Dendritic cell treated with granulocyte-macrophage colony-stimulating factor and Interleukin-4, amounts not matched to agents 40 ng/mL and 50 ng/mL, for 4 days (primary cell): ENCODE measurements at regions of chr12 and their contacts with region 1.

Region 1: GRCh38 chr12:3885277-3886094 is 12.3 kb upstream of the PARP11 start:
- H3K4me3 Mint-ChIP-seq: no peak overlapping the region
- H3K27ac Mint-ChIP-seq: no peak overlapping the region
- H3K4me1 Mint-ChIP-seq: no peaks in the 10 kb centered on the region
- H3K27me3 Mint-ChIP-seq: peaks cover 13% of the 10 kb centered on the region

Region 2: GRCh38 chr12:3901116-3901515 is 15.6 kb after region 1 on chr12:
- intact Hi-C with region 1: no loop called
- H3K4me3 Mint-ChIP-seq: no peak overlapping the region
- H3K27ac Mint-ChIP-seq: no peak overlapping the region
- H3K4me1 Mint-ChIP-seq: peaks cover 11% of the 10 kb centered on the region
- H3K27me3 Mint-ChIP-seq: no peaks in the 10 kb centered on the region

Region 3: GRCh38 chr12:3962631-3963483 is 77.4 kb after region 1 on chr12:
- intact Hi-C with region 1: loop called (anchors 2 kb)
- H3K4me3 Mint-ChIP-seq: no peak overlapping the region
- H3K27ac Mint-ChIP-seq: peak overlapping the region; percentile 44
- H3K4me1 Mint-ChIP-seq: peaks cover 26% of the 10 kb centered on the region
- H3K27me3 Mint-ChIP-seq: no peaks in the 10 kb centered on the region

Region 4: GRCh38 chr12:3996348-3996747 is 110.9 kb after region 1 on chr12:
- intact Hi-C with region 1: loop called (anchors 2 kb)
- H3K4me3 Mint-ChIP-seq: no peak overlapping the region
- H3K27ac Mint-ChIP-seq: no peak overlapping the region
- H3K4me1 Mint-ChIP-seq: peaks cover 15% of the 10 kb centered on the region
- H3K27me3 Mint-ChIP-seq: peaks cover 46% of the 10 kb centered on the region

Region 5: DNA sequence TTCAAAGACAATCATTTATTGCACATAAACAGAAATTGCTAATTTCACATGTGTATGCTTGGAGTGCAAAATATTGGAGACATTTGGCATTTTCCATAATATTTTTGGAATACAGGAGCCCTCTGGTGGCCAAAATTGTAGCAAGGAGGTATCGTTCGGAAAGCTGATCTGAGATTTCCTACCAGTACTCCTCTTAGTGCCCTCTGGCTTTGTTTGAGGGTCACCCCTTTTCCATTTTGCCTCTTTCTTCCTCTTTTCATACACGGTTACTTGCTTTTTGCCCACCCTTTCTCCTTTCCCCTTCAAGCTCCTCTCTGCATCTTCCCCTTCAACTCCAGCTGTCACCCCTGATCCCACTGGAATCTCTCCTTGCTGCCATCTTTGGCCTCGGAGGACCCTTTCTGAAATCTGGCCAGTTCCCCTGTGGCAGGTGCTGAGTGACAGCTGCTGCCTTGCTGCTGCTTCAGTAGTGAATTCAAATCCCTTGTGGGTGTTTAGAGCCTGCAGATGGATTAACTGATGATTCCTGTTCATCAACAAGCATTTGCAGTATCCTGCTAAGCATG is 152.3 kb after region 1 on chr12:
- intact Hi-C with region 1: loop called (anchors 1 kb)
- H3K4me3 Mint-ChIP-seq: no peak overlapping the region
- H3K27ac Mint-ChIP-seq: no peak overlapping the region
- H3K4me1 Mint-ChIP-seq: peaks cover 37% of the 10 kb centered on the region
- H3K27me3 Mint-ChIP-seq: peaks cover 28% of the 10 kb centered on the region

Region 6: DNA sequence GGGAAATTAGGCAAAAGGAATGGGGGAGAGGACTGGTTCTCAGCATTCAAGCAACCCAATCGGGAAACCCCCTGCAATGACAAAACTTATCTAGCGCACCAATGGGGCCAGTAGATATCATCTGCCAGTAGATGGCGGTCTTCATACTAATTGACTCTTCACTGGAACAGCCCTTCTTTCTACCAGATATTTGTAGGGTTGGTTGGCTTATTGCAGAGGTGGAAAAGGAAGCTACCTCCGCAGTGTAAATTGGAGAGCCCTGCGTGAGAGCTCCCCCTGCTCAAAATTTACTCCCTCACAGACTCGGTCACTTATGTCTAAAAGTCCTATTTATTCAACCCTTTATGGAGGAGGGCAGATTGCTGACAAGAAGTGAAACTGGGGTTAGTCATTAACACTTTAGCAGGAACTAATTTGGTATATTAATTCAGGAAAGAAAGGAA is 222.0 kb after region 1 on chr12:
- intact Hi-C with region 1: loop called (anchors 10 kb)
- H3K4me3 Mint-ChIP-seq: peak overlapping the region; percentile 13
- H3K27ac Mint-ChIP-seq: no peak overlapping the region
- H3K4me1 Mint-ChIP-seq: peaks cover 51% of the 10 kb centered on the region
- H3K27me3 Mint-ChIP-seq: peaks cover 75% of the 10 kb centered on the region

Region 7: DNA sequence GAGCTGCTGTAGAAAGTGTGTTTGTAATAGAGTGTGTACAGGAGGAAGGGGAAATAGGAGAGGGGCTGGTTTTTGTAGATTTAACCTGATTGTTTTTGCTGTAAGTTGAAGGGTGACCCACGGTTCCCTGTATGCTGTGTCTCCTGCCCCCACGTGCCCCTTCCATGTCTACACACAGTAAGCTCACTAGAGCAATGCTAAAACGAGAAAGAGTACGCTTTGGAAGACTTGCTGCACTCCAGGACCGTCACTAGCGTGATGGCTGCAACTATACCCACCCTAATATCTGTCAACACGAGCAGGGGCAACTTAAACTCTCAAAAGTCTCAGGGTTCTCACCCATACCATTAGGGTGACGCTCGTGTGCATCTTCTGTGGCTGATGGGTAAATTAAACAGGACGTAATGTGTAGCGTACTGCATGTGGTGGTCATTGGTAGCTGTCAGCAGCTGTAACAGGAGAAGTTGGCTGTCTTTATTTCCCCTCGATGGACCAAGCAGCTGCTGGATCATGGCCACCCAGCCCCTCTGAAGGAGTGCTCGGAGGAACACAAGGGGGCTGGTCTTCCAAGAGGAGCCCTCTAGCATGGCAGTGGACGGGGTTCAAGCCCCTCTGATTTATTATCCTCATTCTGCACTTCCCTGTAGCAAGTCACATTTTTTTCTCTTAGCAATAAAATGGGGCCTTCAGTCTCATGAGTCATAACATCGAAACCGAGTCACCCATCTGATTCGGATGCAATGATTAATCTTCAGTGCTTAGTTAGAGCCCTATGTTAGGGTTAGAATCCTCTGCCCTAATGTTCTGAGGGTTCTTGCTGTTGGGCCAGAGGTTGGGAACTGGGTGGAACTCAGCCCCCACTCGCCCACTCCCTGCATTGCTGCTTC is 402.1 kb after region 1 on chr12:
- intact Hi-C with region 1: no loop called
- H3K4me3 Mint-ChIP-seq: peak overlapping the region; percentile 41
- H3K27ac Mint-ChIP-seq: peak overlapping the region; percentile 88
- H3K4me1 Mint-ChIP-seq: peaks cover 84% of the 10 kb centered on the region
- H3K27me3 Mint-ChIP-seq: peaks cover 1% of the 10 kb centered on the region